PC-9 (cell line): ENCODE measurements at regions of chr17 and their contacts with region 1.

Region 1: DNA sequence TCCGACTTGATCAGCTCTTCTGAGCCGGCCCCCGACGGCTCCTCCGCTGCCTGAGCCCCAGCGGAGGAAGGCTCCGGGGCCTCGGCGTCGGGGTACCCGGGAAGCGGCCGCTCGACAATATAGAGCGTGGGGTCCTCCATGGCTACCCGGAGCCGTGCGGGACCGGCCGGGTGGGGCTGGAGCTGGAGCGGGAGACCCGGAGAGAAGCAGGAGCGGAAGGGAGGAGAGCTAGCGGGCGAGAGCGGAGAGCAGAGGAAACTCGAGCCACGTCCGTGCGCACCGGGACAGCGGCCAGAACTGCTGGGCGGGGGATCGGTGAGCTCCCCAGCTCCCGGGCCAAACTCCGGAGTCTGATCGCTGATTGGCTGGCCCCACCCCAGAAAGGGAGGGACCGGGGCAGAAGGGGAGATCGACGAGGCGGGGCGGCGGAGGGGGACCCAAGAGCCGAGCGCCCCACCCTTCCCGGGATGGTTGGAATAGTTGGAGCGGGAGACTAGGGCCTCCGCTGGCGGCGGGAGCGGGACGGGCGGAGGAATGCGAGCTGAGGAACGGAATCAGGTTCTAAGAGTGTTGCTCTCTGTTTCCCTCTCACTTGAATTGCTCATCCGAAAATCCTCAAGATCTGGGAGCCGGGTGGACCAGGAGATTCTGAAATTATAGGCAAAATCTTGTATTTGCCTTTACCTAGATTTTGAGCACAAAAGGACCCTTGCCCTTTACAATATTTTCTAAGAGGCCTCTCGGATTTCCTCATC is at the start of gene CAVIN1:
- DNase-seq: peak; percentile 82 to 97
- H3K4me3 ChIP-seq: peak within 1 kb of the TSS; percentile 76
- H3K27ac ChIP-seq: 0 out of 2 replicates have a peak within 1 kb of the TSS, but pooled peaks have one; percentile 12
- H3K4me1 ChIP-seq: peaks cover 43% of the 10 kb centered on the region
- H3K27me3 ChIP-seq: no peaks in the 10 kb centered on the region
- CTCF ChIP-seq: no peak
- total RNA-seq, gene CAVIN1: 154 and 170 TPM in 2 replicates

Region 2: DNA sequence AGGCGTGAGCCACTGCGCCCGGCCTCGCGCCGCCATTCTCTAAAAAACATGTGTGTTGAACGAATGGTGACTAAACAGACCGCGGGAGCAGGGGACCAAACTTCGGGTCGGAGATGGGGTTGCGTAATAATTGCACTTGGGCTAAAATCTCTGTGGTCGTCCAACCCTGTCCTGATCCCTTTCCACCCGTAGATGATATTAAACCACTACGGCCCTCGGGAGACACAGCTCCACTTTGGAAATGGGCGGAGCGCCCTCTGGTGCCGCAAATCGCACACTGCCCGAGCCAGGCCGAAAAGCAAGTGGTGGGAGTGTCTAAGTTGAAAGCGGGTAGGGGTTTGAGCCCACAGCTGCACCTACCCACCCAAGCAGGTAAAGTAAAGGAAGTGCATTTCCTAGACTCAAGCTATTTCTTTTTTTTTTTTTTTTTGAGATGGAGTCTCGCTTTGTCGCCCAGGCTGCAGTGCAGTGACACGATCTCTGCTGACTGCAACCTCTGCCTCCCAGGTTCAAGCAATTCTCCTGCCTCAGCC is 17.1 kb before region 1 on chr17:
- CTCF ChIA-PET with region 1: interaction called, 8 read pairs
- POLR2A ChIA-PET with region 1: interaction called, 22 read pairs
- intact Hi-C with region 1: no loop called
- DNase-seq: peak in 1 of 2 experiments; percentile 45
- H3K4me3 ChIP-seq: no peak overlapping the region
- H3K27ac ChIP-seq: no peak overlapping the region
- H3K4me1 ChIP-seq: peaks cover 55% of the 10 kb centered on the region
- H3K27me3 ChIP-seq: no peaks in the 10 kb centered on the region
- CTCF ChIP-seq: peak; percentile 75